Cardiac septum (tissue), 1 donor: ENCODE measurements at regions of chr10 and their contacts with region 1.

Region 1: DNA sequence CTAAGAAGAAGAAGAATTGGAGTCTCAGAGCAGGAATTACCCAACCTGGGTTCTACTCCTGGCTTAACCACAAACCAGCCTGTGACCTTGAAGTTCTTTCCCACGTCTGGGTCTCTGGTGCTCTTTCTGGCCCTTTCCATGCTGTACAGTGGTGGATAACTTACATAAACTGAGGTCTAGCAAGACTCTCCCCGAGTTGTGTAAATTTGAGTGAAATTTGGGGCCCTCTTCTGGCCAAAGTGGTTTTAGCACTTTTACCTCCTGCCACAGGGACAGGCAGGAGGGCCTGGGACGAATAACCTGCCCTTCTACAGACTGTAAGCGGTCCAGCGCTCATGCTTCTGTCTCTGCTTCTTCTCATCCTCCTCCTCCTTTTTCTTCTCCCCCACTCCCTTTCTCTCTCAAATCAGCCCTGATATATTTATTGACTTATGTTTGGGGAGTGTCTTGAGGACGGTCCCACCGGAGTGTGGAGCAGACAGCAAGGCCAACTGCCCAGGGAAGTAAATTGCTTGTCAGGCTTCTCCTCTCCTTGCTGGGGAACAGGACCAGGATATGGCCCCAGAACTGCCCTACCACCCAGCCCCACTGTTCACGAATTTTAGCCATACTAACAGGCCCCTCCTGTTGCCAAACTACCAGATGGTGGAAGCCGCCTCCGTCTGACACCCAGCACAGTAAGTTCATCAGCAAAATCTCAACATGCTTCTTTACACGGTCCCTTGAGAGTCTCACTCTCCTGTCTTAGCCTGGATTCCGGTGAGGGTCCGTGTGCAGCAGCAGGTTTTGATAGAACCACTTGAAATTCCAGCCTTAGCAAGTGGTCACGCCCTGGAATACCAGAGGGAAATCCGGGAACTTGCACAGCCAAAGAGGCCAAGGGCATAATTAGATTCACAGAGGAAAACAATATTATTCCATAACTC is 4.0 kb upstream of the SH3PXD2A start:
- DNase-seq: no peak

Region 2: DNA sequence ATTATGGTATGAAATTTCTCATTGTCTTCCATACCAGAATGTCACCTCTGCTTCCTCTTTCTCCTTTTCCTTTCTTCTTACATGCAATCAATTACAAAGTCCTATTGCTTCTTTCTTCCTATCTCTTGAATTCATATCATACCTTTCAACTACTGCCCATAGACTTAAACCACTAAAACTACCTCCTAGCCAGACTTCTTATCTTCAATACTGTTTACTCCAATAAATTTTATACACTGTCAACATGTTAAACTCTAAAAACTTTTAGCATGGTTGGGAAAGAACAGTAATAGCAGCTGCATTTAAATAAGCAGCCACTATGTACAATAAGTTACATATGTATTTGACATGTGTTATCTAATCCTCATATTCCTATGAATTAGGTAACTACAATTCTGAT is 543.3 kb before region 1 on chr10:
- intact Hi-C with region 1: no loop called
- DNase-seq: no peak

Region 3: DNA sequence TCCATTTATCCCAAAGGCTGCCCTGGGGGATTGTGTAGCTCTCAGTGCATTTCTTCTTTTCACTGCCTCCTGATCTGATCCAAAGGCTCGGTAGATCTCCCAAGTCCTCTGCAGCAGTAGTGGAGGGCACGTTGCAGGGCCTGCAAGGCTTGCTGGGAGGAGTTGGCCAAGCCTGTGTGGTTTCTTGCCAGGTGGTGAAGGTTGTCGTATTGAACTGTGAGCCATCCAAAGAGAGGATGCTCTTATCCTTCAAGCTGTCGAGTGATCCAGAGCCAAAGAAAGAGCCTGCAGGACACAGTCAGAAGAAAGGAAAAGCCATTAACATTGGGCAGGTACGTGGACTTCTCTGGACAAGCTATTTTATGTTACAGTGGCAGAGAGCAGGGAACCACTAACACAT is 441.8 kb before region 1 on chr10:
- intact Hi-C with region 1: no loop called
- DNase-seq: no peak

Region 4: DNA sequence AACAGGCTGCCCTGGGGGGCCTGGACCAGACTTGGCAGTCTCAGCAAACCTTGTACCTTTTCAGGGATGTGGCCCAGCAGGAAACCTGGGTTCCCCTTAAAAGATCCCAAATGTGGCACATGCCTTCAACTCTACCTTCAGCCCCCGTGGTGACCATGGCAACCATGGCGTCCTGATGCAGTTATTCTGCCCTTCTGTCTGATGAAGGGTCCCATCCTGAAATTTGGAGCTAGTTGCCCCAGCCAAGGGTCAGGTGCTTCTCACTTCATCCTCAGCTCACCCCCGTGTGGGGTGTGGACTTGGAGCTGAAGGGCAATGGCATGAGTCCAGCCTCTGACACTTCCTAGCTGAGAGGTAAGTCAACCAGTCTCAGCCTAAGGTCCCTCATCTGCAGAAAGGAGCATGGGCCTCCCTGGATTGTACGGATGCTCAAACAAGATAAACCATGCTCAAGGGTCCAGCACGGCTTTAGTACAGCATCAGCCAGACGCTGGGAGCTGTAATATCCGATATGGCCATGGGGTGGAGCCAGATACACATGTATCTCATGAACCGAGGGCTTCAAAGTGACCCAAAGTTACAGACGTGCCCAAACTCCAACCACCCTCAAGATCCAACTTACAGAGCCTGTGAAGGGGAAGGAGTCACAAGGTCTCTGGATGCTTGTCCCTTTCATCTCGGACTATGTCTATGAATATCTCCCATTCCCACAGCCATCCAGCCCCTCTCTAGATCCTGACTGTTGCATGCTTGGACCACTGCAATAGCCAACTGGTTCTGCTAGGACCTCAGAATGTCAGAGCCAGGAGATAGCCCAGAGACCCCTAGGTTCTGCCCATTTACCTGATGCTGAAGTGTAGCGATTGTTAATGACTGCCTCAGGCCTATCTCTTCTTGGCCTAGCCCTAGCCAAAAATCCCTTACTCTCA is 146.6 kb before region 1 on chr10:
- intact Hi-C with region 1: loop called (anchors 1 kb)
- DNase-seq: no peak

Region 5: DNA sequence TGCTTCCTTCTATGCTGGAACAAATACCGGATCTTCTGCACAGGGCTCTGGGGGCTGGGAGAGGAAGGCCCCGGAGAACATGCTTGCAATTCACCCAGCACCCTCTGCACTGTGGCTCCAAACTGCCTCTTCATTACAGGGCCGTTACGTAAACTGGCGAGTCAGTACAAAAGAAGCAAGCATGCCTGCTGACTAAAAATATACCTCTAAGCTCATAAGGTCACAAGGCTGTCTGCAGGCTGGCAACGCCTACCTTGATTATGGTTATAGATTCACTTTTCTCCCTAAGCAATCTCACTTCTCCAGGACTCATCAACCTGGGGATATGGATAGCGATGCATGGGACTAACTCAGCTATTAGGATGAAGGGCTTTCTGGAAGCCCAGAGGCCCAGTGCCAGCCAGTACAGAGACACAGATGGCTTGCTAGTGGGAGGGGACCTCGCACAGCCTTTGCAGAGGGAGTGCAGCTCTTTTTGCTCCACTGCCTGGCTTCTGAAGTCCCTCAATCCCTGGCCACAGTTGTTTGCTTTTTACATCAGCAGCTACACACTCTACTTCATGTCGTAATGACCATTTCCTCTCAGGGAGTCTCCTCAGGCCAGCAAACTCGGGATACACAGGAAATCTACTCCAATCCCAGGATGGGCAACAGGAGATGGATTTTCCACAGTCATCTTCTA is 100.2 kb before region 1 on chr10:
- intact Hi-C with region 1: loop called (anchors 5 kb)
- DNase-seq: no peak

Region 6: GRCh38 chr10:103781329-103782061 is 77.9 kb before region 1 on chr10:
- intact Hi-C with region 1: loop called (anchors 5 kb)
- DNase-seq: no peak

Region 7: GRCh38 chr10:103816431-103816830 is 43.0 kb before region 1 on chr10:
- intact Hi-C with region 1: loop called (anchors 5 kb)
- DNase-seq: no peak

Region 8: DNA sequence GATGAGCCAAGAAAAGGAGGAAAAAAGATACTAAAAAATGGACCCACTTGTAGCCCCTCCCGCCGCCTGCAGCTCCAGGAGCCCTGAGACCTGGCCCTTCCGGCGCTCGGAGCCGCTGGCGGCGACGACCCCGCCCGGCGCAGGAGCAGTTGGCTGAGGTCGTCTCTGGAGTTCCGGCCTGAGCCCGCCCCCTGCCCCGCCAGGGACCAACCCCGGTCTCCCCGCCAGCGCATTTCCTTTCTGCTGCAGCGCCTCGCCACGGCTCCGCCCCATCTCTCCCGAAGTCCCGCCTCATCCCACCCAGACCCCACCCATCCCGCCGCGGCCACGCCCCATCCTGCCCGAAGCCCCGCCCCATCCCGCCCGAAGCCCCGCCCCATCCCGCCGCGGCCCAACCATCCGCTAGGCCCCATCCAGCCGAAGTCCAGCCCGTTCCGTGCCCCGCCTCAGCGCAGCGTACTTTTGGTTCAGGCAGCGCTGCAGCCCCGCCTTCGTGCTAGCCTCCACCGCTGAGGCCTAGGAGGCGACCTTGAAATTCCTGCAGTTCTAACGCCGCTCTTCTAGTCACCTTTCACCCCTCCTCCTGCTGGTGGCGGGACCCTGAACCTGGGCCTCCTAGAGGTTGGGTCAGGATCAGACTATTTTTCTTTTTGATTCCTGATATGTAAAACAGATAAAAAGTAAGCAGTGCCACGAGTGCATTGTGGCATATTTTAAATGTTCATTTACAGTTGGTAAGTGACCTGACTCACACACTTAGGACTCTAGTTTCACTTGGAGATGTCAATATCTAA is 58.8 kb after region 1 on chr10 and contains the start of gene STN1:
- intact Hi-C with region 1: no loop called
- DNase-seq: peak; percentile 99
- total RNA-seq, gene STN1: 33.9 TPM